ENCODE measurements at regions of chr17 and their contacts with region 1.

Region 1: GRCh38 chr17:40113110-40113906 is 8.5 kb upstream of the MSL1 start:
- DNase-seq: peak; percentile 90
- H3K4me3 ChIP-seq: peak overlapping the region; percentile 44 to 48
- H3K27ac ChIP-seq: peak overlapping the region; percentile 82 to 86
- H3K4me1 ChIP-seq: peaks cover 37 to 41% of the 10 kb centered on the region in 2 experiments
- H3K27me3 ChIP-seq: no peaks in the 10 kb centered on the region
- CTCF ChIP-seq: peak; percentile 84
- EP300 ChIP-seq: 0 out of 4 replicates have a peak, but pooled peaks of 1 of the 2 experiments have one; percentile 21
- RAD21 ChIP-seq: peak; percentile 88

Region 2: GRCh38 chr17:40015005-40015997 is 98.0 kb before region 1 on chr17 and contains the start of gene CSF3:
- CTCF ChIA-PET with region 1: interaction called, 54 read pairs
- POLR2A ChIA-PET with region 1: no interaction called
- DNase-seq: peak; percentile 19
- H3K4me3 ChIP-seq: no peak within 1 kb of the TSS
- H3K27ac ChIP-seq: no peak within 1 kb of the TSS
- H3K4me1 ChIP-seq: no peaks in the 10 kb centered on the region; a peak in 1 of 4 replicates
- H3K27me3 ChIP-seq: no peaks in the 10 kb centered on the region
- CTCF ChIP-seq: no peak
- EP300 ChIP-seq: no peak
- RAD21 ChIP-seq: no peak
- polyA plus RNA-seq, gene CSF3: not detected in 2 replicates

Region 3: DNA sequence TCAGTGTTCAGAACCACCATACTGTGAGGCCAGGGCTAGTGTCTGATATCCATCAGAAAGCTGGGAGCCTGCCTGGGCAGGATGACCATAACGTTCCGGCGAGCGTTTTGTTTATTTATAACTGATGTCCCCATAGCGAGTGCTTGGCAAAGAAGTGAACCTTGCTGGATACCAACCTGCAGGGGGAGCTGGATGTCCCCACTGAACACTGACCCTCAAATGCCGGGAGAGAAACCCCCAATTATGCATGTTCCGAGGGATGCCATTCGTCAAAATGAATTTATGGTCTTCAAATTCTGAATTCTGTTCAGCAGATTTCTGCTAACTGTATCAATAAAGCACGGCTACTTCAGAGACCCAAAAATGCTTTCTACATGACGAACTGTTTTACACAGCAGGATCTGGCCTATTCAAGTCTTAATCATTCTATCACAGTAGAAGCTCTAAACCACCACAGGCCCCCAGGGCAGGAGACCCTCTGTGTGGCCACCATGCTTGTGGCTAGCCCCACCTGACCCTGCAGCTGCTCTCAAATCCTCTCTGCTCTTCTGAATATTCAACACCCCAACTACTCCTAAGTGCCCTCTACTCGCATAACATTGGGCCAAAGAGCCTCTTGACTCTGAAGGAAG is 74.3 kb before region 1 on chr17:
- CTCF ChIA-PET with region 1: interaction called, 15 read pairs
- POLR2A ChIA-PET with region 1: interaction called, 3 read pairs
- DNase-seq: peak; percentile 80
- H3K4me3 ChIP-seq: no peak overlapping the region
- H3K27ac ChIP-seq: peak overlapping the region; percentile 34 to 64
- H3K4me1 ChIP-seq: peaks cover 0 to 6% of the 10 kb centered on the region in 2 experiments; a peak in 1 of 4 replicates
- H3K27me3 ChIP-seq: no peaks in the 10 kb centered on the region
- CTCF ChIP-seq: peak; percentile 83
- EP300 ChIP-seq: no peak
- RAD21 ChIP-seq: peak; percentile 64

Region 4: GRCh38 chr17:40086150-40087044 is 26.9 kb before region 1 on chr17:
- CTCF ChIA-PET with region 1: interaction called, 14 read pairs
- POLR2A ChIA-PET with region 1: no interaction called
- DNase-seq: peak; percentile 92
- H3K4me3 ChIP-seq: peak overlapping the region in 1 of 2 experiments; percentile 32; a peak in 1 of 4 replicates
- H3K27ac ChIP-seq: no peak overlapping the region
- H3K4me1 ChIP-seq: no peaks in the 10 kb centered on the region
- H3K27me3 ChIP-seq: no peaks in the 10 kb centered on the region
- CTCF ChIP-seq: peak; percentile 86
- EP300 ChIP-seq: no peak
- RAD21 ChIP-seq: peak; percentile 85

Region 5: GRCh38 chr17:40151414-40151963 is 38.2 kb after region 1 on chr17:
- CTCF ChIA-PET with region 1: interaction called, 14 read pairs
- POLR2A ChIA-PET with region 1: interaction called, 4 read pairs
- DNase-seq: no peak
- H3K4me3 ChIP-seq: no peak overlapping the region
- H3K27ac ChIP-seq: no peak overlapping the region
- H3K4me1 ChIP-seq: no peaks in the 10 kb centered on the region
- H3K27me3 ChIP-seq: no peaks in the 10 kb centered on the region
- CTCF ChIP-seq: no peak
- EP300 ChIP-seq: no peak
- RAD21 ChIP-seq: no peak

Region 6: DNA sequence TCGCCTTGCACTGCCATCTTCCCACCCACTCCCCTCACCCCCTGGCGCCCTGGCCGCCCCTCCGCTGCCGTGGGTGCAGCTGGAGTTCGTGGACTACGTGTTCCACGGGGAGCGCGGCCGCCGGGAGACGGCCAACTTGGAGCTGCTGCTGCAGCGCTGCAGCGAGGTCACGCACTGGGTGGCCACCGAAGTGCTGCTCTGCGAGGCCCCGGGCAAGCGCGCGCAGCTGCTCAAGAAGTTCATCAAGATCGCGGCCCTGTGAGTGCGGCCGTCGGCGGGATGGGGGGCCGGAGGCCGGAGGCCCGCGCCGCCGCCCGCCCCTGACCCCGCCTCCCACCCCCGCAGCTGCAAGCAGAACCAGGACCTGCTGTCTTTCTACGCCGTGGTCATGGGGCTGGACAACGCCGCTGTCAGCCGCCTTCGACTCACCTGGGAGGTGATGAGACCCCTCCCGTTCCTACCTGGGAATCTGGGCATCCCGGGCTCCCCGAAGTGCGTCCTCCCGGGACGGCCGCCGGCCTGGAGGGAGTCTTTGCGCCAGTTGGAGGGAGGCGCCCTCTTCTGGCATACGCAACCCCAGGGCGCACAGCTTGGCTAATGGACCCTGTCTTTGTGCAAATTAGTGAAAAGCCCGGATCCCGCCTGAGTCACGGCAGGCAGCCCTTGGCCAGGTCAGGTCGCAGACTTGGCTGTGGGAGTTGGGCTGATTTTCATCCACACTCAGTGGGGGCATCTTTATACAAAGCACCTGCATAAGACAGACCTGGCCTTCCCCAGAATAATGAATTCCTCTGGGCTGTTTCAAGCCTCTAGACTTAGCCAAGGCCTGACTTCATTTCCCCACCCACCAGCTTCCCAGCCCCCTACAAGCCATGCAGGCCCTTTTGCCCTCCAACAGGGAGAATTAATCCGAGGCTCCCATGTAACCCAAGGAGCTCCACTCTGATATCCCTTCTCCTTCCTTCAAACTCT is 78.2 kb after region 1 on chr17:
- CTCF ChIA-PET with region 1: interaction called, 63 read pairs
- POLR2A ChIA-PET with region 1: interaction called, 8 read pairs
- DNase-seq: peak; percentile 87
- H3K4me3 ChIP-seq: peak overlapping the region; percentile 48 to 55
- H3K27ac ChIP-seq: peak overlapping the region in 1 of 2 experiments; percentile 55; a peak in 1 of 4 replicates
- H3K4me1 ChIP-seq: peaks cover 4 to 26% of the 10 kb centered on the region in 2 experiments; a peak in 3 of 4 replicates
- H3K27me3 ChIP-seq: no peaks in the 10 kb centered on the region
- CTCF ChIP-seq: peak; percentile 78
- EP300 ChIP-seq: no peak
- RAD21 ChIP-seq: peak; percentile 62

Measured in SK-N-SH (cell line).